ENCODE measurements at regions of chr7 and their contacts with region 1.

Region 1: GRCh38 chr7:129298268-129298893 is 73.6 kb downstream of the AHCYL2 start:
- DNase-seq: peak; percentile 35
- H3K4me3 ChIP-seq: no peak overlapping the region
- CTCF ChIP-seq: peak; percentile 77

Region 2: GRCh38 chr7:129210256-129210988 is 88.0 kb before region 1 on chr7:
- in situ Hi-C with region 1: loop called (anchors 5 kb)
- DNase-seq: no peak
- H3K4me3 ChIP-seq: no peak overlapping the region
- CTCF ChIP-seq: peak; percentile 81

Measured in astrocyte of the cerebellum (primary cell).